H1 (cell line): ENCODE measurements at regions of chr7 and their contacts with region 1.

Region 1: DNA sequence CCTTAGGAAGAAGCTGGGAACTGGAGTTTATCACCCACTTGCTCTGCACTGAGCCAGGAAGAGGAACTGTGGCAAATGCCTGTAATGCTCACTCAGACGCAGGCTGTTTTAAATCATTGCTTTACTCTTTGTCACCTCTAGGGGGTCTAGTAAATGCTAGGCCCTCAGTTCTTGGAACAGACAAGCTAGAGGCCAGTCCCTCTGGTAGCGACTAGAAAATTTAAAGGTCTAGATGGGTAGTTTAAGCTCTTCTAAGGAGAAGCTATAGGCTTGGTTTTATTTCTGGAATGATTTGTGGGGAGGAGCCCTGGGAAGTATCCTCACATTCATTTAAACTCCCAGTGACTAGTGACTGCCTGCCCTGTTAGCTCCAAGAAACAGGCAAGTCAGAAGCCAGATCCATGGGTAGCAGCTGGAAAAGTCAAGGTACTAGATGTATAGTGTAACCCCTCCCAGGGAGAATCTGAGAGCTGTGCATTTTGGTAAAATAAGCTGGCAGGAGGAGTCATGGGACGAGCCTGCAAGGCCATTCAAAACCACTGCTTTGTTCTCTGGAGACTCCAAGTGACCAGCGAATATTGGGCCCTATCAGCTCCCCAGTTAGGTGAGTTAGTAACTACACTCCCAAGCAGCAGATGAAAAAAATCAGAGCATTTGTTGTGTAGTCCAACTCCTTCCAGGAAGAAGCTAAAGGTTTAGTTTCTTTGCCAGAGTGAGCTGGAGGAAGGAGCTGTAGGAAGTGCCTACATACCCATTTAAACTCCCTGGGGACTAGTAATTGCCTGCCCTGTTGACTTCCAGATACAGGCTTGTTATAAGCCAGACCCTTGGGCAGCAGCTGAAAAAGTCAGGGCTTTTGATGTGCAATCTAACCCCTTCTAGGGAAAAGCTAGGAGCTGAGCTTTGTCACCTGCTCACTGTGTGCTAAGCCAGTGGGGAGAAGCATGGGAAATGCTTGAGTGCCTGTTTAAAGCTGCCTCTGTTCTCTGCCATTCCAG is 68.9 kb downstream of the DYNC1I1 start:
- DNase-seq: no peak
- H3K4me3 ChIP-seq: no peak overlapping the region; a peak in 1 of 8 replicates
- H3K27ac ChIP-seq: no peak overlapping the region
- H3K4me1 ChIP-seq: peaks cover 0 to 9% (median 0%) of the 10 kb centered on the region in 4 experiments; a peak in 3 of 7 replicates
- H3K27me3 ChIP-seq: no peaks in the 10 kb centered on the region
- CTCF ChIP-seq: peak in 2 of 3 experiments; percentile 58 to 67; a peak in 3 of 4 replicates
- EP300 ChIP-seq: no peak
- POLR2A ChIP-seq: no peak
- RAD21 ChIP-seq: peak in 1 of 2 experiments; percentile 40; a peak in 1 of 4 replicates

Region 2: DNA sequence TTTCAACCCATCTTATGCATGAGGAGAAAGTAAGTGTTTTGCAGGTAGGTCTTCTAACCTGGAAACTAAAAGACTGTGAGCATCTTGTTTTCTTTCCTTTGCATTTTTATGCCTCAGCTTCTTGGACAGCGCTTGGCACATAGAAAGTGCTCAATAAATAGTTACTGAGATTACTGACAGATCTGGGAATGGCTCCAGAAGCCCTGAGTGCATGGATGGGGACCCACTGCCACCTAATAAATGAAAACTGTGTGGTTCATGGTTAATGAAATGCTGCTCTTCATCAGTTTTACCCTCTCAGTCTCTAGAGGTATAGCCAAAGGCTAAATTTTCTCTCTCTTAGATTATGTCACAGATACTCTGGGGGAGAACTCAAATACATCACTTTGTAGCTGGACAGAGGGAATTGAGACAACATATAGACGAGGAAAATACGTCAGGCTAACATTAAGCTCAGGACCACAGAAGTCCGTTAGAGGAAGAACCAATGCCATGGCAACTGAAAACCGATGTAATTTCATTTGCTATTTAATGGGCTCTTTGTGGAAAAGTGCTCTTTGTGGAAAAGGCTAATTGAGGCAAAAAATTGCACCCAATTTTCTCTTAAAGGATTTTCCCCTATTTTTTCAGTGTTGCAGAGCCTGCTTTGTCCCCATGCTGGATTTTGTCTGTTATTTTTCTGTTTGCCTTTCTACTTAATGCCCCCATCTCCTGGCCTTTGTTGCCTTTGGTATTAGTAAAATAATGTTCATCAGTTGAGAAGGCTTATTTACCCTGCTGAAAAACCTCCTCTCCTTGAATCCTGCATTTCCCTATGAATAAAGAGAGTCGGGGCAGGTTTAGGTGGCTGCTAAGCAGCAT is 337.8 kb before region 1 on chr7:
- CTCF ChIA-PET with region 1: no interaction called
- POLR2A ChIA-PET with region 1: no interaction called
- DNase-seq: no peak
- H3K4me3 ChIP-seq: no peak overlapping the region; a peak in 1 of 8 replicates
- H3K27ac ChIP-seq: no peak overlapping the region
- H3K4me1 ChIP-seq: peaks cover 0 to 15% (median 11%) of the 10 kb centered on the region in 4 experiments; a peak in 3 of 7 replicates
- H3K27me3 ChIP-seq: peaks cover 0 to 1% (median 0%) of the 10 kb centered on the region in 4 experiments; a peak in 1 of 7 replicates
- CTCF ChIP-seq: no peak
- EP300 ChIP-seq: no peak
- POLR2A ChIP-seq: no peak
- RAD21 ChIP-seq: no peak

Region 3: DNA sequence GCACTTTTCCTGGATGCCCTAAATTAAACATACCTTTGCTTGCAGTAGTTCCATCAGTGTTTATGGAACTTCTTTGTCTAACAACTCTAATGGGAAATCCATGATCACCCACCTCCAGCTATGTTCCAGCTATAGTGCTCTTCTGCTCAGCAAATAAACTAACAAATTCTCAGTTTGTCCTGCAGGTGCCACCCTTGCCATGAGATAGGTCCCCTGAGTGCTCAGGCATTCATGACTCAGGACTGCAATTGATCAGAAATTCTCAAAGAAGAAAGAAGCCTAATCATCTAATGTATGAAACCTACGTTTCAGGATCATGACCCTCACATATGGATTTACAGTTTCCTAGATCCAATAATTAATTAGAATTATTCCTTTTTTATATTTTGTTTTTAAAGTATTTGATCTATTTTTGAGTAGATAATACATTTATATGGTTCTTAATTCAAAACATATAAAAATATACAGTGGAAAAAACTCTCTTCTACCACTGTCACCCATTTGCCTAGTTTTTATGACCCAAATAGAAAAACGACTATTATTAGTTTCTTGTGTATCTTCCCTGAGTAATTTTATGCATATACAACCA is 117.6 kb before region 1 on chr7:
- CTCF ChIA-PET with region 1: interaction called, 66 read pairs
- POLR2A ChIA-PET with region 1: no interaction called
- DNase-seq: peak; percentile 25 to 52
- H3K4me3 ChIP-seq: no peak overlapping the region
- H3K27ac ChIP-seq: no peak overlapping the region
- H3K4me1 ChIP-seq: peaks cover 0 to 2% (median 0%) of the 10 kb centered on the region in 4 experiments; a peak in 1 of 7 replicates
- H3K27me3 ChIP-seq: no peaks in the 10 kb centered on the region; a peak in 1 of 7 replicates
- CTCF ChIP-seq: peak; percentile 23 to 80 (median 61)
- EP300 ChIP-seq: no peak
- POLR2A ChIP-seq: no peak
- RAD21 ChIP-seq: peak; percentile 92 to 94

Region 4: GRCh38 chr7:95772298-95772770 is 68.9 kb before region 1 on chr7 and contains the start of gene DYNC1I1:
- CTCF ChIA-PET with region 1: interaction called, 36 read pairs
- POLR2A ChIA-PET with region 1: no interaction called
- DNase-seq: no peak
- H3K4me3 ChIP-seq: peak within 1 kb of the TSS; percentile 38 to 69 (median 49)
- H3K27ac ChIP-seq: no peak within 1 kb of the TSS
- H3K4me1 ChIP-seq: peaks cover 0 to 9% (median 3%) of the 10 kb centered on the region in 4 experiments; a peak in 5 of 7 replicates
- H3K27me3 ChIP-seq: peaks cover 4 to 22% (median 18%) of the 10 kb centered on the region in 4 experiments
- CTCF ChIP-seq: no peak
- EP300 ChIP-seq: no peak
- POLR2A ChIP-seq: no peak
- RAD21 ChIP-seq: 0 out of 4 replicates have a peak, but pooled peaks of 1 of the 2 experiments have one; percentile 4
- total RNA-seq, gene DYNC1I1: 0.58 and 1.2 TPM in 2 replicates

Region 5: GRCh38 chr7:95804052-95804451 is 37.2 kb before region 1 on chr7:
- CTCF ChIA-PET with region 1: interaction called, 53 read pairs
- POLR2A ChIA-PET with region 1: no interaction called
- DNase-seq: no peak
- H3K4me3 ChIP-seq: no peak overlapping the region
- H3K27ac ChIP-seq: no peak overlapping the region
- H3K4me1 ChIP-seq: no peaks in the 10 kb centered on the region
- H3K27me3 ChIP-seq: no peaks in the 10 kb centered on the region
- CTCF ChIP-seq: no peak
- EP300 ChIP-seq: no peak
- POLR2A ChIP-seq: no peak
- RAD21 ChIP-seq: no peak

Region 6: DNA sequence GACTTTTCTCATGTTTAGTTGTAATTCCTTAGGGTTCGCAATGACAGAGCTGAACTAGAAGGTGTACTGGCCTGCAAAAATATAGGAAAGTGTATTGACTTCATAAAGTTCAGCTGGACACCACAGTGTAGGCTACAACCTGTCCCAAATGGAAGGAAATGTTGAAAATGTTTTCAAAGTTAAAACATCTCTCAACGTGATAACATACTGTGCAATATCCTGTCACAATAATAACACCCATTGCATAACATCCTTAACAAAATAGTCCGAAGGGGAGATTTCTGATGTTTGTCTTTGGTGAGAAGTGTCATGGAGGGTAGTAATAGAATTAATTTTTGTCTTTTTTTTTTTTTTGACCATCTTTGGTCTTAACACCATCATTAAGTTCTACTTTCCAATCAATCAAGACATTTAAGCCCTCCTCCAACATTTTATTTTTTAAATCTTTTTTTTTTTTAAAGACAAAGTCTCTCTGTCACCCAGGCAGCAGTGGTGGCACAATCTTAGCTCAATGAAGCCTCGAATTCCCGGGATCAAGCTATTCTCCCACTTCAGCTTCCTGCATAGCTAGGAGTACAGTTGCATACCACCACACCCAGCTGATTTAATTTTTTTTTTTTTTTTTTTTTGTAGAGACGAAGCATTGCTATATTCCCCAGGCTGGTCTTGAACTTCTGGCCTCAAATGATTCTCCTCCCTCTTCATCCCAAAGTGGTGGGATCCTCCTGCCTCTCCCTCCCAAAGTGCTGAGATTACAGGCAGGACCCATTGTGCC is 23.2 kb before region 1 on chr7:
- CTCF ChIA-PET with region 1: interaction called, 75 read pairs
- POLR2A ChIA-PET with region 1: no interaction called
- DNase-seq: no peak
- H3K4me3 ChIP-seq: no peak overlapping the region
- H3K27ac ChIP-seq: no peak overlapping the region
- H3K4me1 ChIP-seq: no peaks in the 10 kb centered on the region; a peak in 1 of 7 replicates
- H3K27me3 ChIP-seq: no peaks in the 10 kb centered on the region
- CTCF ChIP-seq: no peak
- EP300 ChIP-seq: no peak
- POLR2A ChIP-seq: no peak
- RAD21 ChIP-seq: no peak

Region 7: DNA sequence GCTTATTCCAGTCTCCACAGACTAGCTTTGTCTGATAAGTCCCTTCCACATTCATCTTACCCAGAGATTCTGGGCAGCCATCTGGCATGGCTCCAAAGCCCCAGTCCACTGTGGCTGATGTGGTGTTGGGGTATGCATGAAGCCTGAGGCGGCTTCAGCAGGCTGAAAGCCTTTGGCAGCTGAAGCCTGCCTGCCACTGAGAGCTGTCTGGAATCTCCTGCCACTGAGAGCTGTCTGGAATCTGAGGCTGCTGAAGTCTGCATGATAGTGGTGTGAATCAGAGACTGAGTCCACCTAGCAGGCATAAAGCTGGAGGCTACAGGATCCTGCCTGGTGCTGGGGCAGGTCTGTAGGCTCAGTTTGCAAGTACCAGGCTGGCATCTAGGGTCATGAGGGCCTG is 18.2 kb after region 1 on chr7:
- CTCF ChIA-PET with region 1: interaction called, 174 read pairs
- POLR2A ChIA-PET with region 1: interaction called, 5 read pairs
- DNase-seq: no peak
- H3K4me3 ChIP-seq: no peak overlapping the region
- H3K27ac ChIP-seq: no peak overlapping the region
- H3K4me1 ChIP-seq: peaks cover 0 to 3% (median 3%) of the 10 kb centered on the region in 4 experiments; a peak in 1 of 7 replicates
- H3K27me3 ChIP-seq: peaks cover 0 to 1% (median 0%) of the 10 kb centered on the region in 4 experiments; a peak in 1 of 7 replicates
- CTCF ChIP-seq: no peak
- EP300 ChIP-seq: no peak
- POLR2A ChIP-seq: no peak
- RAD21 ChIP-seq: no peak

Region 8: GRCh38 chr7:96052860-96053470 is 211.7 kb after region 1 on chr7:
- CTCF ChIA-PET with region 1: no interaction called
- POLR2A ChIA-PET with region 1: no interaction called
- DNase-seq: no peak
- H3K4me3 ChIP-seq: no peak overlapping the region
- H3K27ac ChIP-seq: no peak overlapping the region
- H3K4me1 ChIP-seq: no peaks in the 10 kb centered on the region
- H3K27me3 ChIP-seq: no peaks in the 10 kb centered on the region
- CTCF ChIP-seq: no peak
- EP300 ChIP-seq: no peak
- POLR2A ChIP-seq: no peak
- RAD21 ChIP-seq: no peak

Region 9: GRCh38 chr7:96359876-96360275 is 518.6 kb after region 1 on chr7:
- CTCF ChIA-PET with region 1: no interaction called
- POLR2A ChIA-PET with region 1: no interaction called
- DNase-seq: no peak
- H3K4me3 ChIP-seq: no peak overlapping the region
- H3K27ac ChIP-seq: no peak overlapping the region
- H3K4me1 ChIP-seq: no peaks in the 10 kb centered on the region
- H3K27me3 ChIP-seq: no peaks in the 10 kb centered on the region
- CTCF ChIP-seq: no peak
- EP300 ChIP-seq: no peak
- POLR2A ChIP-seq: no peak
- RAD21 ChIP-seq: no peak